ENCODE measurements at regions of chr4 and their contacts with region 1.

Region 1: DNA sequence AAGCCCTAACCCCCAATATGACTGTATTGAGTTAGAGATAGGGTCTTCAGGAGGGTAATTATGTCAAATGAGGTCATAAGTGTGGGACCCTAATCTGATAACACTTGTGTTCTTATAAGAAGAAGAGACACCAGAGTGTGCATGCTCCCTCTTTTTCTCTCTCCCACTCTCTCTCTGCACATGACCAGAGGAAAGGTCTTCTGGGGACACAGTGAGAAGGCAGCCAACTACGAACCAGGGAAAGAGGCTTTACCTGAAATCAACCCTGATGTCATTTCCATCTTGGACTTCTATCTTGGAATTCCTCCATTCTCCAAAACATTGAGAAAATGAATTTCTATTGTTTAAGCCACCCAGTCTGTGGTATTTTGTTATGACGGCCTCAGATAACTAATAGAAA is 97.2 kb upstream of the MAD2L1 start:
- DNase-seq: no peak
- H3K4me3 ChIP-seq: no peak overlapping the region
- CTCF ChIP-seq: no peak

Region 2: GRCh38 chr4:119841361-119841760 is 322.5 kb before region 1 on chr4:
- in situ Hi-C with region 1: no loop called
- DNase-seq: no peak
- H3K4me3 ChIP-seq: no peak overlapping the region
- CTCF ChIP-seq: no peak

Region 3: GRCh38 chr4:121096629-121097028 is 932.7 kb after region 1 on chr4:
- in situ Hi-C with region 1: loop called (anchors 5 kb)
- DNase-seq: peak; percentile 26
- H3K4me3 ChIP-seq: no peak overlapping the region
- CTCF ChIP-seq: peak; percentile 7